ENCODE measurements at regions of chr19 and their contacts with region 1.

Region 1: DNA sequence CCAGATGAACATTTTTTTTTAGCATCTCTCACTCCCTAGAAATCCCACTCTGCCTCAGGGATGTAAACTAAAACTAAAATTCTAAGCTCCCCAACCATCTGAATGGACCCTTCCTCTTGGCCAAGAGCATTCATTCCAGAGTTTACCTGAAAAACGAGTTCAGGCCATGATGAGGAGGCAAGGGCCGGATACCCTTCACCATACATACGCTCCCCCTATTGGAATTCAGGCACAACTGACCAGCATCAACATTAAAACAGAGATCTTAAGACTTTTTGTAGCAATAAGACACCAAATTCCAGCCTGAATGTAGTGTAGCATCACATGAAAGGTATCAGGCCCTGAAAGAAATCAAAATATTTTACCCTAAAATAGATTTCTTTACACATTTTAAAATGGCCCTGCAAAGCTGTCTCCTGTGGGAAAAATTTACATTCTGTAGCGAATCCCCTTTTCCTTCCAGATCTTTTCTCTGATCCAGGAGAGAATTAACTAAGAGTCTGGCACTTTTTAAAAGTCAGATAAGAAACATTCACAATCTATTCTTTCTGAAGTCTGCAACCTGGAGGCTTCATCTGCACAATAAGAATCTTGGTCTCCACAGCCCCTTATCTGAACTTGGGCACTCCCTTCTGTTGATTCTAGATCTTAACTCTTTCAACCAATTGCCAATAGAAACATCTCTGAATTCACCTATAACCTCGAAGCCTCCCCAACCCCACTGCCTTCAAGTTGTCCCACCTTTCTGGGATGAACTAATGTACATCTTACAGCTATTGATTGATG is 888.5 kb downstream of the UQCRFS1 start:
- DNase-seq: no peak
- ATAC-seq: no peak
- H3K4me3 ChIP-seq: no peak overlapping the region
- H3K4me3 Mint-ChIP-seq: no peak overlapping the region
- H3K27ac ChIP-seq: no peak overlapping the region
- H3K27ac Mint-ChIP-seq: peak overlapping the region in 1 of 9 donors; percentile 67
- H3K4me1 ChIP-seq: no peaks in the 10 kb centered on the region
- H3K4me1 Mint-ChIP-seq: peaks cover 0 to 17% (median 0%) of the 10 kb centered on the region in 7 donors
- H3K27me3 ChIP-seq: no peaks in the 10 kb centered on the region
- H3K27me3 Mint-ChIP-seq: no peaks in the 10 kb centered on the region

Region 2: DNA sequence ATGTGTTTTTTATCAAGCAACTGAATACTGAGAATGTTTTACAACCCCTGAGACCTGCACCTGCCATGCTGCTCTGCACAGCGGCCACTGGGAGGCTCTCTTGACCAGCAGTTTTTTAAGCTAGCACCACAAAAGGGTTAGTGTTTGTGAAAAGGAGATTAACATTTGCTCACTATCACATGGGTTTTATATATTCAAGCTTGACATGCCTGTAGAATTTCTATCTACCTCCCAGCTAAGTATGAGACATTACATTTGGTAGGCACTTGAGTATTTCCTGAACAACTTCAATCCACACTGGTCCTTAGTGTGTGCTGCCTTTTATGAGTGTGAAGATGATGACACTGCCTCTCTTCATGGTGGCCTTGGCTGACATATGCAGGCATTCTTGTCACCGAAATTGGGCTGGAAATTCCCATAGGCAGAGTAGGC is 350.4 kb before region 1 on chr19:
- CTCF ChIA-PET with region 1: no interaction called
- POLR2A ChIA-PET with region 1: no interaction called
- intact Hi-C with region 1: loop called in 1 of 2 experiments (anchors 2 kb)
- DNase-seq: no peak
- ATAC-seq: no peak
- H3K4me3 ChIP-seq: no peak overlapping the region
- H3K4me3 Mint-ChIP-seq: no peak overlapping the region
- H3K27ac ChIP-seq: no peak overlapping the region
- H3K27ac Mint-ChIP-seq: no peak overlapping the region
- H3K4me1 ChIP-seq: no peaks in the 10 kb centered on the region
- H3K4me1 Mint-ChIP-seq: no peaks in the 10 kb centered on the region
- H3K27me3 ChIP-seq: no peaks in the 10 kb centered on the region
- H3K27me3 Mint-ChIP-seq: peaks cover 0 to 15% (median 0%) of the 10 kb centered on the region in 5 donors

Region 3: DNA sequence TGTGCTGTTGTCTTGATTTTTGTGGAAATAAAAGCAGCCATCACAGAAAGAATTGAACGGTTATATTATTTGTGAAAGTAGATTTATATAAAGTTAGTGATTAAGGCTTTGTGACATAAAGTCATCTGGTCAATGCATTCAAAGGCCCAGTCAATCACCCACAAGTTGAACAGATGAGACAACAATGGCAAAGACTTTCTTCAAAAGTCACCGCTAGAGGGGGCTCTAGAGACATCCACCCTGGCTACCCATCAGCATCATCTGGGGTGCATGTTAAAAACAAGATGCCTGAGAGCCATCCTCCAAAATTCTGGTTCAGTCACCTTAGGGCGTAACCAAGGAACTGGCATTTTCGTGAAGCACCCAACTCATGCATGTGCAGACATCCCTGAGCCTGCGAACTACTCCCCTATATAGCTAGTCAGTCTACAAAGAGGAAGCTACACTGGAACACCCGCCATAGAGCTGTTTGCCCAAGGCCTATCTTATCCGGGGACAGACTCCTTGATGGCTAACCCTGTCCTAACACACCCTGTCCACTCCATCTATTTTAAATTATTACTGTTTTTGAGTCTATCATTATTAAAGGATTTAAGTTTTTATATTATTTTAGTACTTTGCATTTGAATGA is 82.1 kb before region 1 on chr19:
- CTCF ChIA-PET with region 1: no interaction called
- POLR2A ChIA-PET with region 1: no interaction called
- intact Hi-C with region 1: loop called in 1 of 2 experiments (anchors 5 kb)
- DNase-seq: peak in 1 of 9 donors; percentile 27
- ATAC-seq: no peak
- H3K4me3 ChIP-seq: no peak overlapping the region
- H3K4me3 Mint-ChIP-seq: no peak overlapping the region
- H3K27ac ChIP-seq: no peak overlapping the region
- H3K27ac Mint-ChIP-seq: no peak overlapping the region
- H3K4me1 ChIP-seq: no peaks in the 10 kb centered on the region
- H3K4me1 Mint-ChIP-seq: peaks cover 0 to 2% (median 0%) of the 10 kb centered on the region in 7 donors
- H3K27me3 ChIP-seq: no peaks in the 10 kb centered on the region
- H3K27me3 Mint-ChIP-seq: no peaks in the 10 kb centered on the region

Region 4: DNA sequence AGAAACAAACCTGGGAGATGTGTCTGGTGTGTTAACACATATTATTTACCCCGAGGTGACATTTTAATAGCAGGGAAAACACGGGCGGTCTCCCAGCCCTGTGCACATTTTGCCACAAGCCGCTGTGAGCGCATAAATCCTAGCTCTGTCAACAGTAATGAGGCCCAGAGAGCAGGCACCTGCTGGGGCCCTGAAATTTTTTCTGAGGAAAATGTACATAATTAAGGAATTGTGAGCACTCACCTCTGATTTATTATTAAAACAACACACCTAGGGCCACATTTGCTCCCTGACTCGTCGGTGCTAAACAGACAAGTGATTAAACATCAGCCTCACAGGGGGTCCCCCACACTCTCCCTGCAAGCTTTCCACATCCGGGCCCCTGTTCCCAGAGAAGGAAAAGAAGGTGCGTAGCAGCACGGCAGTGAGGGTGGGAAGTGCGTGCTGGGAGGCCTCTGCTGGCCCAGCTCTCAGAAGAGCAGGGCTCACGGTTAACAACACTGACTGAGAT is 272.1 kb after region 1 on chr19:
- CTCF ChIA-PET with region 1: no interaction called
- POLR2A ChIA-PET with region 1: no interaction called
- intact Hi-C with region 1: no loop called
- DNase-seq: no peak
- ATAC-seq: no peak
- H3K4me3 ChIP-seq: no peak overlapping the region
- H3K4me3 Mint-ChIP-seq: no peak overlapping the region
- H3K27ac ChIP-seq: no peak overlapping the region
- H3K27ac Mint-ChIP-seq: no peak overlapping the region
- H3K4me1 ChIP-seq: no peaks in the 10 kb centered on the region
- H3K4me1 Mint-ChIP-seq: no peaks in the 10 kb centered on the region
- H3K27me3 ChIP-seq: no peaks in the 10 kb centered on the region
- H3K27me3 Mint-ChIP-seq: peaks cover 0 to 10% (median 0%) of the 10 kb centered on the region in 5 donors

Measured in naive thymus-derived CD4-positive, alpha-beta T cell (primary cell).